HepG2 (cell line): ENCODE measurements at regions of chr5 and their contacts with region 1.

Region 1: DNA sequence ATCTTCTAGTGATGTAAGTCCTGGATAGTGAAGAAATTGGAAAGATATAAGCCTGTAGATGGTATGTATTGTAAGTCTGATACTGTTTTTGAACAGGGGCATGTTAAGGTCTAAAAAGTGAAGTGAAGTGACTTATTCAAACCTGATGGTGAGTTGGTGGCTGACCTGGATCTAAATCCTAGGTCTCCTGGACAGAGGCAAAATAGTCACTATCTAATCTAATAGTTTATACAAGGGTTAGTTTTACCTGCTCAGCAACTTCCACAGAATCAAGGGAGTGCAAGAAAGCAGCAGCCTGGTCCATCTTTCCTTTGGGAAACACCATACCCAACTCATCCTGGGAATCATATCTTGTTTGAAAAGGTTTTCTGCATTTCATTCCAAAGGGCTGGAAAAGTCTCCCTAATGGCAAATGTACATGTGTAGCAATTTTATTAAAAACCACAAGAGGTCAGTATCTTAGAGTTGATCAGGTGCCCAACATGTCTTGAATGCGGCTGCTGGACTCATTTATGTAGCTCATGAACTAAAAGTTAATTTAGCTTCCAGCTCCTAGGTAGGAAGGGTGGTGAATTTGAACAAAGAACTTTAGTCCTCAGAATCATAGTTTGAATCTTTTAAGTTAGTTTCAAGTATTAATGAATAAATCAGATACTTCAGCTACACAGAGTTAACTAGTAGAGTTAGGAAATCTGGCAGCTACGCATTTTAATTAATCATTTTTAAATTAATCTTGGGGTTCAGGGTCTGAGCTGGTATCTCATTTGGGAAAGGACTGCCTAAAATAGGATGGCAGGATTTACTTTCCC is 26.0 kb downstream of the SKP2 start:
- DNase-seq: peak; percentile 48
- ATAC-seq: peak; percentile 45; the same call in 2 of the 3 replicates
- H3K4me3 ChIP-seq: no peak overlapping the region
- H3K27ac ChIP-seq: peak overlapping the region; percentile 23
- H3K4me1 ChIP-seq: peaks cover 60% of the 10 kb centered on the region
- H3K27me3 ChIP-seq: no peaks in the 10 kb centered on the region
- CTCF ChIP-seq: peak; percentile 71
- EP300 ChIP-seq: no peak
- POLR2A ChIP-seq: no peak
- RAD21 ChIP-seq: 0 out of 2 replicates have a peak, but pooled peaks have one; percentile 35

Region 2: DNA sequence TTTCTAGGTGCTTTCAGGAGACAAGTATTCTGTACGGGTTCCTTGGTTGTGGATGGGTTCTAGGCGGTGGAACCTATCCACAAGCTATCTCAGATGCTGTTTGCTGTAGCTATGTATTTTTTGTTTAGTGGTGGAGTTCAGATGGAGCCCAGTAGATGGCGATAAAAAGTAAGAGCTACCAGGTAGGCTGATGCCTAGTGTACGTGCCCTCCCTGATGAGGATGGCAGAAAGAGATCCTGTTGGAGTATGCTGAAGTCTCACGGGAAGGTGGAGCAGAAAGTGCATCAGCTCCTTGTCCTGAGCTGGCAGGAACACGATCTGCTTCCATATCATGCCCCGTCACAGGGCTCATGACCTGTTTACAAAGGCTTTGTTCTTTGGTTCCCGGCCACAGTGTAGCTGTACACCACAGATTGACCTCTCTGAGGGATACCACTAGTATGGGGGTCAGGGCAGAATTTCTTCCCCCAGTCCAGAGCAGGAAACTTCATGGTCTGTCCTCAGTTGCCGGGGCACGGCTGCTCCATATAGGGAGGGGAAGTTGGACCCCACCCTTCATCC is 98.6 kb before region 1 on chr5:
- CTCF ChIA-PET with region 1: no interaction called
- POLR2A ChIA-PET with region 1: no interaction called
- in situ Hi-C with region 1: no loop called
- intact Hi-C with region 1: loop called (anchors 5 kb)
- DNase-seq: peak; percentile 55
- ATAC-seq: peak; percentile 99
- H3K4me3 ChIP-seq: peak overlapping the region in 1 of 3 experiments; percentile 38; a peak in 1 of 6 replicates
- H3K27ac ChIP-seq: no peak overlapping the region
- H3K4me1 ChIP-seq: no peaks in the 10 kb centered on the region
- H3K27me3 ChIP-seq: no peaks in the 10 kb centered on the region
- CTCF ChIP-seq: peak; percentile 85
- EP300 ChIP-seq: no peak
- POLR2A ChIP-seq: no peak
- RAD21 ChIP-seq: peak; percentile 31; the same call in 1 of the 2 replicates